K562 (cell line): ENCODE measurements at regions of chr7 and their contacts with region 1.

Region 1: GRCh38 chr7:95511716-95512260 is 26.0 kb downstream of the ASB4 start:
- DNase-seq: peak; percentile 59 to 87 (median 68)
- ATAC-seq: peak; percentile 99
- H3K4me3 ChIP-seq: no peak overlapping the region
- H3K27ac ChIP-seq: no peak overlapping the region
- H3K4me1 ChIP-seq: peaks cover 0 to 5% of the 10 kb centered on the region in 2 experiments; a peak in 2 of 5 replicates
- H3K27me3 ChIP-seq: no peaks in the 10 kb centered on the region
- CTCF ChIP-seq: peak; percentile 87 to 92 (median 87)
- EP300 ChIP-seq: no peak; the same call in 1 of the 2 replicates
- POLR2A ChIP-seq: no peak
- RAD21 ChIP-seq: peak; percentile 80 to 86

Region 2: GRCh38 chr7:94874047-94874785 is 637.6 kb before region 1 on chr7:
- CTCF ChIA-PET with region 1: no interaction called
- POLR2A ChIA-PET with region 1: no interaction called
- in situ Hi-C with region 1: no loop called
- intact Hi-C with region 1: no loop called
- DNase-seq: no peak
- ATAC-seq: no peak
- H3K4me3 ChIP-seq: no peak overlapping the region
- H3K27ac ChIP-seq: no peak overlapping the region
- H3K4me1 ChIP-seq: no peaks in the 10 kb centered on the region
- H3K27me3 ChIP-seq: no peaks in the 10 kb centered on the region
- CTCF ChIP-seq: no peak
- EP300 ChIP-seq: no peak
- POLR2A ChIP-seq: no peak
- RAD21 ChIP-seq: no peak

Region 3: DNA sequence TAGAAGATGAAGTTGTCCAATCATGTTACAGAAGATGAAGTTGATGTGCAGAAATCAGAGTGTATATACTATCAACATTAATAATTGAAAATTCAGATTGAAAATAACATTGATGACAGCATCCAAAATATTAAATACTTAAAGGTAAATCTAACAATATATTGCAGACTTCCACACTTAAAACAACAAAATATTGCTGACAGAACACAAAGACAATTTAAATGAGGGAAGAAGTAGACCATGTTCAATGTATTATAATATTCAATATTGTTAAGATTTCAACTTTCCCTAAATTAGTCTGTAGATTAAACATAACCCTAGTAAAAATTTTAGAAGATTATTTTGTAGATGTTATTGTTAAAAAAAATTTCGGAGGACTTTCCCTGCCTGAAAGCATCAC is 339.4 kb before region 1 on chr7:
- CTCF ChIA-PET with region 1: no interaction called
- POLR2A ChIA-PET with region 1: no interaction called
- in situ Hi-C with region 1: no loop called
- intact Hi-C with region 1: no loop called
- DNase-seq: no peak
- ATAC-seq: no peak
- H3K4me3 ChIP-seq: no peak overlapping the region
- H3K27ac ChIP-seq: no peak overlapping the region
- H3K4me1 ChIP-seq: no peaks in the 10 kb centered on the region
- H3K27me3 ChIP-seq: no peaks in the 10 kb centered on the region
- CTCF ChIP-seq: no peak
- EP300 ChIP-seq: no peak
- POLR2A ChIP-seq: no peak
- RAD21 ChIP-seq: no peak

Region 4: GRCh38 chr7:95527033-95527775 is 15.4 kb after region 1 on chr7:
- CTCF ChIA-PET with region 1: interaction called, 9 read pairs
- POLR2A ChIA-PET with region 1: no interaction called
- in situ Hi-C with region 1: no loop called
- intact Hi-C with region 1: loop called (anchors 1 kb)
- DNase-seq: peak; percentile 72 to 78 (median 74)
- ATAC-seq: peak; percentile 98
- H3K4me3 ChIP-seq: no peak overlapping the region
- H3K27ac ChIP-seq: no peak overlapping the region
- H3K4me1 ChIP-seq: peaks cover 0 to 4% of the 10 kb centered on the region in 2 experiments; a peak in 1 of 5 replicates
- H3K27me3 ChIP-seq: peaks cover 0 to 5% of the 10 kb centered on the region in 2 experiments; a peak in 1 of 5 replicates
- CTCF ChIP-seq: peak; percentile 79 to 93 (median 91)
- EP300 ChIP-seq: no peak
- POLR2A ChIP-seq: no peak
- RAD21 ChIP-seq: peak; percentile 96 to 97

Region 5: GRCh38 chr7:95690367-95690947 is 178.7 kb after region 1 on chr7:
- CTCF ChIA-PET with region 1: interaction called, 37 read pairs
- POLR2A ChIA-PET with region 1: interaction called, 3 read pairs
- in situ Hi-C with region 1: no loop called
- intact Hi-C with region 1: loop called (anchors 1 kb)
- DNase-seq: peak; percentile 23 to 45 (median 34)
- ATAC-seq: peak; percentile 86
- H3K4me3 ChIP-seq: no peak overlapping the region
- H3K27ac ChIP-seq: no peak overlapping the region
- H3K4me1 ChIP-seq: no peaks in the 10 kb centered on the region
- H3K27me3 ChIP-seq: no peaks in the 10 kb centered on the region
- CTCF ChIP-seq: peak; percentile 64 to 75 (median 65)
- EP300 ChIP-seq: no peak
- POLR2A ChIP-seq: no peak
- RAD21 ChIP-seq: peak; percentile 67 to 81

Region 6: GRCh38 chr7:95886501-95887090 is 374.8 kb after region 1 on chr7:
- CTCF ChIA-PET with region 1: no interaction called
- POLR2A ChIA-PET with region 1: no interaction called
- in situ Hi-C with region 1: loop called (anchors 25 kb)
- intact Hi-C with region 1: no loop called
- DNase-seq: no peak
- ATAC-seq: no peak
- H3K4me3 ChIP-seq: no peak overlapping the region
- H3K27ac ChIP-seq: no peak overlapping the region
- H3K4me1 ChIP-seq: no peaks in the 10 kb centered on the region
- H3K27me3 ChIP-seq: no peaks in the 10 kb centered on the region
- CTCF ChIP-seq: no peak
- EP300 ChIP-seq: no peak
- POLR2A ChIP-seq: no peak
- RAD21 ChIP-seq: no peak